ENCODE measurements at regions of chr12 and their contacts with region 1.

Region 1: DNA sequence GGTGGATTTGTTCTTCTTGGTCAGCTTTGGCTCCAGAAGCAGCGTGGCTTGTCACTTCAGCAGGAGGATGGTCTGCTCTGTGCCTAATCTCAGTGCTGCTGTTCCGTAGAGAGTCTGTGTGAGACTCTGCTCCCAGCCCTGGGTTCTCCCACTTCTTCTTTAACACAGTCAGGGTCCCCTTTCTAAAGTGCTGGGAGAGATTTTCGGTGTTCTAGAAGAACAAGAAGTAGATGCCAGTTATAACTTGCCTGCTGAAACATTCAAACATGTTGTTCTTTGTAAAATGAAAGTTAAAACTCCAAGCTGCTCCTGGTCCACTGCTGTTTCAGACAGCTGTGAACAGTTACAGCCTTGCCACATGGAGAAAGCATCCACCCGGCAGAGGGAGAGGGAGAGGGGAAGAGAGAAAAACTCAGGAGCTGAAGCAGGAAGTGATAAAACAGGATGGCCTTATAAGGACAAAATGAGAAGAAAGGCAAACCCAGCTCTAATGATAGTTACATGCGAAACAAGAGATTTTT is 55.2 kb upstream of the CERS5 start:
- DNase-seq: peak; percentile 53 to 84 (median 66)
- ATAC-seq: peak; percentile 84
- H3K4me3 ChIP-seq: peak overlapping the region; percentile 48
- H3K27ac ChIP-seq: peak overlapping the region; percentile 82
- H3K4me1 ChIP-seq: peaks cover 7 to 16% of the 10 kb centered on the region in 2 experiments; a peak in 4 of 5 replicates
- H3K27me3 ChIP-seq: no peaks in the 10 kb centered on the region
- CTCF ChIP-seq: peak in 1 of 3 experiments; percentile 42; a peak in 2 of 6 replicates
- EP300 ChIP-seq: no peak; the same call in 1 of the 2 replicates
- POLR2A ChIP-seq: peak; percentile 81
- RAD21 ChIP-seq: no peak

Region 2: GRCh38 chr12:50211392-50212070 is 10.8 kb before region 1 on chr12:
- CTCF ChIA-PET with region 1: no interaction called
- POLR2A ChIA-PET with region 1: interaction called, 16 read pairs
- in situ Hi-C with region 1: no loop called
- intact Hi-C with region 1: no loop called
- DNase-seq: no peak
- ATAC-seq: peak; percentile 33; the same call in 1 of the 3 replicates
- H3K4me3 ChIP-seq: no peak overlapping the region
- H3K27ac ChIP-seq: no peak overlapping the region
- H3K4me1 ChIP-seq: no peaks in the 10 kb centered on the region
- H3K27me3 ChIP-seq: no peaks in the 10 kb centered on the region
- CTCF ChIP-seq: peak in 1 of 3 experiments; percentile 33; a peak in 2 of 6 replicates
- EP300 ChIP-seq: no peak
- POLR2A ChIP-seq: no peak
- RAD21 ChIP-seq: peak; percentile 32 to 57

Region 3: DNA sequence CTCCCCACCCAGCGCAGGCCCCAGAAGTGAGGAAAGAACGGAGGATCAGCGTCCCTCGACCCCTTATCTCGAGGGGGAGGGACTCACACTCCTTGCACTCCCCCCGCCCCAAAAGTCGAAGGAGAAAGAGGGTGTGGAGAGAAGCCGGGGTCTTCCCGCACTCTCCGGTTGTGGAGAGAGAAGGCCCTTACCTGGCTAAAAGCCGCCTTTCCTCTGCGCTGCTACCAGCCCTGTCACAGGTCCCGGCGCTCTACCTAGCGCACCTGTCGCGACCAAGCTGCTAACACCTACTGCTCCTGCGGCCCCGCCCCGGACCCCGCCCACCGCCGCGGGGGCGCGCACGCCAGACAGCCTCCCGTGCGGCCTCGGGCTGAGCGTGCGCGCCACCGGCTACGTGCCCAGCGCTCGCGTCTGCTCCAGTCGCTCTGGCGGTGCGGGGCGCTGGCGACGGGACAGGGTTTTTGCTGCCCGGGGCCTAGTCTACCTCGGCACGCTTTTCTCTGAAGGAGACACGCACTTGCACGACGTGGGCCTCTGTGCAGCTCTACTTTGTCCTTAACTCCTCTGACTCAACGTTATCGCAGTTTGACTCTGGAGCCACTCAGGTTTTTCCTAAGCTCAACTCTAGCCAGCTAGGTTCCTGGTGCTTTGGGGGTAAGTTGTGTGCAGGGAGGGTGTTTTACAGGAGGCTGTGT is 61.0 kb after region 1 on chr12 and contains the start of gene LIMA1:
- CTCF ChIA-PET with region 1: no interaction called
- POLR2A ChIA-PET with region 1: interaction called, 10 read pairs
- in situ Hi-C with region 1: no loop called
- intact Hi-C with region 1: loop called (anchors 2 kb)
- DNase-seq: peak; percentile 95 to 97 (median 96)
- ATAC-seq: peak; percentile 95
- H3K4me3 ChIP-seq: peak within 1 kb of the TSS; percentile 67
- H3K27ac ChIP-seq: peak within 1 kb of the TSS; percentile 93
- H3K4me1 ChIP-seq: peaks cover 3 to 7% of the 10 kb centered on the region in 2 experiments; a peak in 2 of 5 replicates
- H3K27me3 ChIP-seq: no peaks in the 10 kb centered on the region
- CTCF ChIP-seq: peak; percentile 41 to 49 (median 45); a peak in 4 of 6 replicates
- EP300 ChIP-seq: no peak
- POLR2A ChIP-seq: peak; percentile 89
- RAD21 ChIP-seq: peak; percentile 14 to 49; a peak in 2 of 4 replicates
- polyA plus RNA-seq, gene LIMA1: 20.2 to 23.7 TPM

Region 4: DNA sequence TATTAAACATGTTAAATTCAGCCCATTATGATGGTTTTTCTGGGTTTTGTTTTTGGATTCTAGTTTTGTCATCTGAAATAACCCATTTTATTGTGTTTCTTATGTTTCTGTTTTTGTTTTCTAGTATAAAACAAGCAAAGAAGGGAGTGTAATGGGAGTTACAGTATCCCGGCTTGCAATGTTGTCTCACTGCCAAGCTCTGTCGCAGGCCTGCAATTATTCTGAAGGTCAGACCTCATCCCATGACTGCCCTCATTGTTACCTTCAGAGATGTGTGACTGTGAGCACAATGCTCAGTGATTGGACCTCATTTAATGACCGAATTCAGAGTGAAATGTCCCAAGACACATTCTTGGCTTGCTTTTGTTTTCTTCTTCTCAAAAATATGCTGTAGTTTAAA is 468.6 kb after region 1 on chr12:
- CTCF ChIA-PET with region 1: no interaction called
- POLR2A ChIA-PET with region 1: no interaction called
- in situ Hi-C with region 1: no loop called
- intact Hi-C with region 1: no loop called
- DNase-seq: no peak
- ATAC-seq: no peak
- H3K4me3 ChIP-seq: no peak overlapping the region
- H3K27ac ChIP-seq: no peak overlapping the region
- H3K4me1 ChIP-seq: no peaks in the 10 kb centered on the region
- H3K27me3 ChIP-seq: no peaks in the 10 kb centered on the region
- CTCF ChIP-seq: no peak
- EP300 ChIP-seq: no peak
- POLR2A ChIP-seq: no peak
- RAD21 ChIP-seq: no peak